Posterior cingulate gyrus (tissue), 11 donors: ENCODE measurements at regions of chr1 and their contacts with region 1.

Region 1: GRCh38 chr1:222465211-222466041 is 82.5 kb downstream of the HHIPL2 start:
- DNase-seq: peak; percentile 77 to 98 (median 85)

Region 2: DNA sequence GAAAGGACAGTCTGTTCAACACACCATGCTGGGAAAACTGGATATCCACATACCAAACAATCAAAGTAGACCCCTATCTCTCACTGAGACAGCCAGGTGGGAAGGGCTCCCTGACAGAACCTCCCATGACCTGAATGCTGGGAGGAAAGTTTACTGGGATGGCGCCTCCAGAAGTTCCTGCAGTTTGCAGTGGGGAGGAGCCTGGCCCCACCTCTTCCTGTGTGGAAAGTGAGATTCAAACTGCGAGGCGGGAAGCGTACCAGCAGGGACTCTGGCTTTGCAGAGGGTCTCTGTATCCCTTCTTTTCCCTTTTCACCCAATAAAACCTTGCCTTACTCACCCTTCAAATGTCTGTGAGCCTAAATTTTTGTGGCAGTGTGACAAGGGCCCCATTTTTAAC is 108.2 kb before region 1 on chr1:
- intact Hi-C with region 1: no loop called
- DNase-seq: no peak

Region 3: DNA sequence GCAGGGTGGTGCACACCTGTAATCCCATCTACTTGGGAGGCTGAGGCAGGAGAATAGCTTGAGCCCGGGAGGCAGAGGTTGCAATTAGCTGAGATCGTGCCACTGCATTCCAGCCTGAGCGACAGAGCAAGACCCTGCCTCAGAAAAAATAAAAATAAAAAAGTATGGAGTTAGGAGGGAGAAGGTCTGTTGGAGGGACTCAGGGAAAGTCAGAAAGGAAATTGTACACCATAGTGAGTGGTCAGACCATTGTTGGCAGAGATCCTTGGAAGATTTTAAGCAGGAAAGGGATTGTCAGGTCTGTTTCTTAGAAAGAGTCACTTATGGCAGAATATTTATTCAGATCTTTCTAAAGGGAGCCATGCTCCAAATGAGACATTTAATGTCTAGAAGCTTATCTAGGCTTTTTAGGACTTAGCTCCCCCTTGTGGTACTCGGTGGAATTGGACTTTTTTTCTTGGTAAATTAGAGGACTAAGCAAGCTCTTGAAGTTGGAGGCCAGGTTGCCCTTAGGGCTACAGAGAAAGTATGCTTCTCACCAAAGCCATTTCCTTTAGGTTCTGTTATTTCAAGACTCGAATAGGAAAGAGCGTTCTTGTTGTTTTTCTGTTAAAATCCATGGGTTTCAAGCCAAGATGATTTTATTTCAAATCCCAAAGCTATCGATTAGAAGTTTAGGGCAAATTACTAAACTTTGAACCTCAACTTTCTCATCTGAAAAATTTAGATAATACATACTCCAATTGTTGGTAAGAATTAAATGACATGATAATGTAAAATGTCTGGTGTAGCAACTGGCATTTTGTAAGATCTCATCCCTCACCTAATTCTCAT is 169.0 kb after region 1 on chr1:
- intact Hi-C with region 1: loop called (anchors 1 kb)
- DNase-seq: peak in 2 of 10 donors; percentile 19 to 57

Region 4: GRCh38 chr1:223081181-223081994 is 616.0 kb after region 1 on chr1:
- intact Hi-C with region 1: loop called (anchors 5 kb)
- DNase-seq: peak; percentile 51 to 97 (median 74)